Ascending aorta (tissue), 2 donors: ENCODE measurements at regions of chr5 and their contacts with region 1.

Region 1: DNA sequence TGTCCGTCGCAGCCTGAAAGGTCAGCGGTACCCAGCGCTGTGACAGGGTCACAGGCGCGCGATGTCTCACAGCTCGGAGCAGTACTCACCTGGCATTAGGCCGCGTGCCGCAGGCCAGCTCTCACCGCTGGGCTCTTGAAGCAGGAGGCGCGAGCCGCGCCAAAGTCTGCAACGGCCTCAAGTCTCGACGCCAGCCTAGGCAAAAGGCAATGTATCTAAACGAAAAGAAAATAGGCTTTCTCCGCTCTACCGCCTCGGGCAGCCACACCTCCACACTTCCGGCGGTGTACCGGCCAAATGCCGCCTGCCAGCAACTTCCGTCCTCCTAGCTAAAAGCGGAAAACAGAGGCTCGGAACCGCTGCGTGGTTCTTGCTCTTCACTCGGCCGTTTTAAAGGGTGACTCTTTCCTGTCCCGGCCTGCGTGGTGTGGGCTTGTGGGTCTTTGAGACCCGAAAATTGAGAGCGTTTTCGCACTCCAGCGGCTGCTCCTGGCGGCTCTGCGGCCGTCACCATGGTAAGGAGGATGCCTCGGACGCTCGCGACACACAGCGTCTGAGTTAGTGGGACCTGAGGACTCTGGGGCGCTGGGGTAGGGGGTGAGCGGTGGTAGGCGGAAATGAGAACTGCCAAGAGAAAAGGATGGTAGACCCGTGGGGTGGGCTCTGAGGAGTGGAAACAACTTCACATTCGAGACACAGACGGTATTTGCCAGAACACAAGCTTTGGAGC is at the starts of genes GFM2 and NSA2:
- DNase-seq: peak; percentile 50 to 94
- H3K4me3 ChIP-seq: peak within 1 kb of the TSS; percentile 88 to 96
- H3K27ac ChIP-seq: peak within 1 kb of the TSS; percentile 80 to 91
- H3K4me1 ChIP-seq: peaks cover 7 to 20% of the 10 kb centered on the region in 2 donors
- H3K27me3 ChIP-seq: no peaks in the 10 kb centered on the region
- CTCF ChIP-seq: no peak
- total RNA-seq, gene GFM2: 12.7 TPM
- total RNA-seq, gene NSA2: 103 TPM

Region 2: DNA sequence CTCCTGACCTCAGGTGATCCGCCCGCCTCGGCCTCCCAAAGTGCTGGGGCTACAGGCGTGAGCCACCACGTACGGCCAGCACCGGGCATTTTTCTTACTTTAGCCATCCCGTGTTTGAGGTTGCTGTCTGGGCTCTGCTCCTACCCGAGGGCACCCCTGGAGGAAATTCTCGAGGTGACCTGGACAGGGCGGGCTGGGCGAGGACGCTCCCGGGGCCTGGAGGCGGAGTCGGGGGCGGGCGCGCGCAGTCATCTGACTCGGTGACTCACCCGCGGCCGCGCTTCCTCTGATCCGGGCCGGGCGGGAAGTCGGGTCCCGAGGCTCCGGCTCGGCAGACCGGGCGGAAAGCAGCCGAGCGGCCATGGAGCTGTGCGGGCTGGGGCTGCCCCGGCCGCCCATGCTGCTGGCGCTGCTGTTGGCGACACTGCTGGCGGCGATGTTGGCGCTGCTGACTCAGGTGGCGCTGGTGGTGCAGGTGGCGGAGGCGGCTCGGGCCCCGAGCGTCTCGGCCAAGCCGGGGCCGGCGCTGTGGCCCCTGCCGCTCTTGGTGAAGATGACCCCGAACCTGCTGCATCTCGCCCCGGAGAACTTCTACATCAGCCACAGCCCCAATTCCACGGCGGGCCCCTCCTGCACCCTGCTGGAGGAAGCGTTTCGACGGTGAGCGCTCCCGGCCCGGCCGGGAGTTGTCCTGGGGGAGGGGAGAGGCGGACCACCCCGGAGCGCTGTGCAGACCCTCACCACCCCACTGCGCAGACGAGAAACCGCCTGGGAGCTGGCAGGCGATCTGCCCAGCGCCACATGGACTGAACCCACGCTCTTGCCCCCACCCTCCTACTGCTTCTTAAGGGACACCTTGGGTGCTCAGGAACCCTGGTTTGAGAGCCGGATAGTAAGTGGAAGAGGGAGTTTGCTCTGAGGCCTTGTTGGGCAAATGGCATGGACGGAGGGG is 81.8 kb before region 1 on chr5 and contains the start of gene HEXB:
- intact Hi-C with region 1: loop called (anchors 2 kb)
- DNase-seq: peak; percentile 58 to 95
- H3K4me3 ChIP-seq: peak within 1 kb of the TSS; percentile 76 to 92
- H3K27ac ChIP-seq: peak within 1 kb of the TSS; percentile 90 to 91
- H3K4me1 ChIP-seq: peaks cover 0 to 11% of the 10 kb centered on the region in 2 donors
- H3K27me3 ChIP-seq: no peaks in the 10 kb centered on the region
- CTCF ChIP-seq: no peak
- total RNA-seq, gene HEXB: 124 TPM

Region 3: DNA sequence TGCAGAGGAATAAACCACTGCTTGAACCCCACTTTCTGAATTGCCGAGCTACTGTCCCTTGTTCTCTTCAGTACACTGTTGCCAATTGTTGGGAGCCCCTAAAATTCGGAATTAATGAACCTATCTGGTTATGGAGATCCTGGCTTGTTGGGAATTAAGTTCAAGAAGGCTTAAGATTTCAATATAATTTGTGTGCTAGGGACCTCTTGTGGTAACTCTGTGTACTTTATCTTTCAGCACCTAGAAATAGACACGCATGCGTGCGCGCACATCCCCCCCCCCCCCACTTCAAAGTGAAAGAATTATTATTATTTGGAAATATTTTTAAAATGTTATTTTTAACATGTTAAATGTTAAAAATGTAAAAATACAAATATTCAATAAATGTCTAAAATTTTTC is 152.5 kb after region 1 on chr5:
- intact Hi-C with region 1: loop called (anchors 1 kb)
- DNase-seq: no peak
- H3K4me3 ChIP-seq: no peak overlapping the region
- H3K27ac ChIP-seq: no peak overlapping the region
- H3K4me1 ChIP-seq: no peaks in the 10 kb centered on the region
- H3K27me3 ChIP-seq: no peaks in the 10 kb centered on the region
- CTCF ChIP-seq: peak; percentile 31 to 57 (median 35)

Region 4: DNA sequence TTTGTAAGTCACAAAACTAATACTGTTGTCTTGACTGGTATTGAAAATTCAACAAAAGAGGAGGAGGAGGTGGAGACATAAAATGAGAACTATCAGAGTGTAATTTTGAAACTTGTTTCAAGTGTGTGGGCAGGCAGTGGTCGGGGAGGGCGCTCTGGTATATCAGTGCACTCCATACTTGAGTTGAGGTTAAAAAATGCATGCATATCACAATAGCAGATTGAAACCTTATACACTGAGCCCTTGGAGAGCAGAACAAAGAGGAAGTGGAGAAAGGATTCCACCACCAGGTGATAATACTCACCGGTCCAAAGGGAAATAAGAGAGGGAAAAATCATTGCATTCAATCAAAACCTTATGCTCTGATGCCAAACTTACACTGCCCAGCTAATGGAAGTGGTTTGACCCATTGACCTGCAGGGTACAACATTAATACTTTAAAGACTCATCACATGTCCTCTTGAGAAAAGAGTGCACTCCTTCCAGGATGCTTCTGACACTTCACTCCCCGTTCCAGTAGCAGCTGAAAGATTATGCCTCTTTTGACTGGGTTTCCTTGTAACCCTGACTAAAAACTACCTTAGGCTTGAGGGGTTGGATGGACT is 178.6 kb after region 1 on chr5:
- intact Hi-C with region 1: loop called (anchors 10 kb)
- DNase-seq: no peak
- H3K4me3 ChIP-seq: no peak overlapping the region
- H3K27ac ChIP-seq: no peak overlapping the region
- H3K4me1 ChIP-seq: peaks cover 0 to 3% of the 10 kb centered on the region in 2 donors
- H3K27me3 ChIP-seq: no peaks in the 10 kb centered on the region
- CTCF ChIP-seq: no peak

Region 5: DNA sequence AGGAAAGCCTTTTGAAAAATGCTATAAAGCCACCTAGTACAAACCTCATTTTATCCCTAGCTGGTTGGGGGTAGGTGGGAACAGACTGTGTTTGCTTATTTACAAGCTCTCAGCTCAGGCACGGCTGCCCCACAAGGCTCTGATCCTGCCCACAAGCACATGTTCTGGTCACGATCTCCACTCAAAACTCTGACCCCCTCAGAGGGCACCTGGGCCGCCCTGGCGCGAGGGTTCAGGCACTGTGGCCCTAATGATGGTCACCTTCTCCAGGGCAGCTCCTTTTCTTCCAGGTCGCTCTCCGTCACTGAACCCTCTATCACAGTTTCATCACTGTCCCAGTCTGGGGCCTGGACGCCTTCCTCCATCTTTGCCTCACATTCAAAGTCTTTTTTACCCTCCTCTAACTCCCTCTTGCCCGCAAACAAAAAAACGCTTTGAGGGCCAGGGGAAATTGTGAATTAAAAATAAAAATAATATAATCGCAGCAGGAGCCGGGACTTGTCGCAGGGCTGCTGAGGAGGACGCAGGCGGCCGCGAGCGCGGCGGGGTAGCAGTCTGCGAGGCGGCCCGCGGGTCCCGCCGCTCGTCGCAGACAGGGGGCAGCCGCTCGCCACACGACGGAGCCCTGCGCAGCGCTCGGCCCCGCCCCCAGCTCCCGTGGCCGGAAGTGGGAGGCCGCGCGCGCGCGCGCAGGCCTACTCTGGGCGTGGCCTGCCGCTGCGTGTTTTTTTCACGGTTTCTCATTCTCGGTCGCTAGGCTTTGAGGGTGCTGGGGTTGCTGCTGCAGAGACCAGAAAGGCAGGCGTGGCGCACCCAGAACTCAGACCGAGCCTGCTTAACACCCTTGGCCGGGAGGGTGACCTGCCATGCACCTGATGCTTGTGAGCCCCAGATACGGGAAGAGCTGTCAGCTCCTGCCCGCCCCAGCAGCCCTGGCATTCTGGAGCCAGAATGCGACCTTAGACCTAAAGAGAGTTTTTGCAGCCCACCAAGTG is 469.6 kb after region 1 on chr5 and contains the start of gene ANKRD31:
- intact Hi-C with region 1: loop called (anchors 5 kb)
- DNase-seq: peak; percentile 30 to 89
- H3K4me3 ChIP-seq: peak within 1 kb of the TSS; percentile 61 to 91
- H3K27ac ChIP-seq: peak within 1 kb of the TSS; percentile 75 to 76
- H3K4me1 ChIP-seq: no peaks in the 10 kb centered on the region
- H3K27me3 ChIP-seq: no peaks in the 10 kb centered on the region
- CTCF ChIP-seq: peak; percentile 59 to 92 (median 65)
- total RNA-seq, gene ANKRD31: not detected